Mammary epithelial cell (primary cell): ENCODE measurements at regions of chrX and their contacts with region 1.

Region 1: DNA sequence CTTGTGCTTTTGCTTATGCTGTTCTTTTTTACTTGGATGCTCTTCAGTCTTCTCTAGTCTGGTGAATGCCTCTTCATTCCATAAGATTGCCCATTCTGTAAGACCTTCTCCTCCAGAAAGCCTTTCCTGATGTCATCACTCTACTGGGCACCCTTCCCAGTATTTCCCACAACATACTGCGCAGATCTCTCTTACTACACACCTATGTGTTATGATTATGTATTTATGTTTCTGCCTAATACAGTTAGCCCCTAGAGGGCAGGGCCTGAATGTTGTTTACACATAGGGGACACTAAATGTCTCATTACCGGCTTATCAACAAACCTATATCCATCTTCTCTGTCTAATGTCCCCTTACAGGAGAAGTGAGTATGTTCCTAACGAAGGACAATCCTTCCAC is 21.1 kb downstream of the AIFM1 start:
- DNase-seq: peak; percentile 58
- H3K4me3 ChIP-seq: no peak overlapping the region
- H3K27ac ChIP-seq: no peak overlapping the region
- H3K4me1 ChIP-seq: peaks cover 3% of the 10 kb centered on the region
- H3K27me3 ChIP-seq: peaks cover 2% of the 10 kb centered on the region
- CTCF ChIP-seq: peak in 1 of 2 donors; percentile 14

Region 2: DNA sequence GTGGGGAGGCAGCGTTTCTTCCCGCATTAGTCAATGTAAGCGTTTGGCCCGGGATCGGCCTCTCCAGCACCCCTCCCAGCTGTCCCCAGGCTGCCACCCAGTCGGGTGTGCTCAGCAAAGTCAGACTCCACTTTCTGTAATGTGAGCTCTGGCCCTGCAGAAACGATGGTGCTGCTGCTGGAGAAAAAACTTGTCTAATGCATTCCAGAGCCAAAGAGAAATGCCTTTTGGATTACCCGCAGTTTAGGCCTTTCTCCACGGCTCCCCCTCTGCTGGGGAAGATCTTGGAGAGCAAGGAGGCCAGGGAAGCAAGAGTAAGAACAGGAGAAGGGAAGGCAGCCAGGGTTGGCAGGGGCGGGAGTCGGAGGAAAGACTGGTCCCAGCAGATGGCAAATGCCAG is 89.4 kb before region 1 on chrX:
- CTCF ChIA-PET with region 1: no interaction called
- dilution Hi-C with region 1: loop called (anchors 5 kb)
- in situ Hi-C with region 1: no loop called
- intact Hi-C with region 1: no loop called
- DNase-seq: no peak
- H3K4me3 ChIP-seq: no peak overlapping the region
- H3K27ac ChIP-seq: no peak overlapping the region
- H3K4me1 ChIP-seq: no peaks in the 10 kb centered on the region
- H3K27me3 ChIP-seq: no peaks in the 10 kb centered on the region
- CTCF ChIP-seq: no peak

Region 3: DNA sequence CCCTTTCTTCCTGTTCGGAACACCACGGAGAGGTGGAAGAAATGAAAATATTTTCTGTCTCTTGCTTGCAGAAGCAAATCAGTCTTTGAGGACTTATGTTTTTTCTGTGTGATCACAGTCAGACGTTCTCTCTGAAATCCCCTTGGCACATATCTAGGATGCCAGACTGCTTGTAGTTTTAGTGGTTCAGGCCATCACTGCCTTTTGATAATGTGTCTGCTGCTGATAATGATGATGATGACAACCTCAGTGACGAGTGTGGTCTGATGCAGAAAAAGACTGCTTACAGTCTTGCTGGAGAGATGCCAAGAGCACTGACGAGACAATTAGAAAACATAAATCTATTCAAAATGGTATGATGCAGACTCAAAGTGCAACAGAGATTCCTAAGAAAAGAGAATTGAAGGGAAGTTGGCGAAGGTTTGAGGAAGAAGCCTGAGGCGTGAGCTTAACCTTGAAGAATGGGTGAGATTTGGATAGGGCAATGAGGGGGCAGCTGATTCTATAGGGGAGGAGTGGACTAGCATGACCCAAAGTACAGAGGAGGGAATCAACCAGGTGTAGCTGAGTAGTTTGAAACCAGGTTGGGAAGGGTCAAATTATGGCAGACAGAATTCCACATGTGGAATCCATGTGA is 35.2 kb after region 1 on chrX:
- CTCF ChIA-PET with region 1: no interaction called
- dilution Hi-C with region 1: no loop called
- in situ Hi-C with region 1: no loop called
- intact Hi-C with region 1: no loop called
- DNase-seq: no peak
- H3K4me3 ChIP-seq: no peak overlapping the region
- H3K27ac ChIP-seq: no peak overlapping the region
- H3K4me1 ChIP-seq: no peaks in the 10 kb centered on the region
- H3K27me3 ChIP-seq: no peaks in the 10 kb centered on the region
- CTCF ChIP-seq: no peak

Region 4: GRCh38 chrX:130393451-130394074 is 249.1 kb after region 1 on chrX:
- CTCF ChIA-PET with region 1: no interaction called
- dilution Hi-C with region 1: no loop called
- in situ Hi-C with region 1: no loop called
- intact Hi-C with region 1: no loop called
- DNase-seq: peak; percentile 28
- H3K4me3 ChIP-seq: no peak overlapping the region
- H3K27ac ChIP-seq: no peak overlapping the region
- H3K4me1 ChIP-seq: no peaks in the 10 kb centered on the region
- H3K27me3 ChIP-seq: no peaks in the 10 kb centered on the region
- CTCF ChIP-seq: peak; percentile 78 to 86

Region 5: GRCh38 chrX:130726661-130727060 is 582.2 kb after region 1 on chrX:
- CTCF ChIA-PET with region 1: no interaction called
- dilution Hi-C with region 1: no loop called
- in situ Hi-C with region 1: no loop called
- intact Hi-C with region 1: no loop called
- DNase-seq: peak; percentile 72
- H3K4me3 ChIP-seq: no peak overlapping the region
- H3K27ac ChIP-seq: peak overlapping the region; percentile 33
- H3K4me1 ChIP-seq: peaks cover 23% of the 10 kb centered on the region
- H3K27me3 ChIP-seq: no peaks in the 10 kb centered on the region
- CTCF ChIP-seq: no peak